PC-9 (cell line): ENCODE measurements at regions of chr11 and their contacts with region 1.

Region 1: DNA sequence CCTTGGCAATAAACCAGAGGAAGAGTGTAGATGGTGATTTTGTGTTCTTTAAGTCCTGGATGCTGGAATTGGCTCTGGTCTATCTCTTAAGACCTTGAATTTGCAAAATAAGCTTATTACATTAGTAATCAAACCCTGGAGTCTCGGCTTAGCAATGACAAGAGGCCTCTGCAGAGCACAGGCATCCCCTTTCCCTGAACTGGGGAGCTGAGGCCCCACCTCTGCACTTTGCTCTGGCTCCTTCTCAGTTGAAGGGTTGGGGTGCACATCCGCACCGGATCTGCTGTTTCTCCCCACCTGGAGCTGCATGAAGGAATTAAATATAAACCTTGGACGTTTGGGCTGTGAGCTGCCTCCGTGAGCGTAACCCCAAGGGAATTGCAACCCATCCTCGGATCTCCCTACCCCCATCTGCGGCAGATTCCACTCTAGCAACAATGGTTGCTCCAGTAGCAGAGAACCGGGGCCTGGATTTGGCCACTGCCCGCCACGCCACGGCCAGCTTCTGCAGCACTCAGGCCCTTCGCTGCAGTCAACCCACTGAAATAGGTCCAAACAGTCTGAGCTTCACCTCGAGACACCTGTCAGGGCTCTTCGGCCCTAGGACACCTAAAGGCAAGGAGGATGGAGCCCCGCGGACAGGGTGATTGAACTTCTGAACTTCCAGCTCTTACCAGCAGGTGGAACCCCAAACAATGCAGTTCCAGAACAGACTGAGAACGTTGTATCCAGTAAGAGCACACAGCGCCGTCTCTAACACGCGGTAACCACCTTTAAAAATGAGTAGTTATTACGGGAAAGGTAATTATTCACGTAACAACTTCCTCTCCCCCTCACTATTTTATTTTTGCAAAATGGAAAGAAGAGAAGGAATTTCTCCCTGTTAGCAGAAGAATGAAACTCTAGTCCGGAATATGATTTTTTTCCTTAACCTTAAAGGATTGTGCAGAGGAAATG is 54.8 kb upstream of the CAPRIN1 start:
- DNase-seq: peak; percentile 73 to 81
- H3K4me3 ChIP-seq: peak overlapping the region; percentile 17
- H3K27ac ChIP-seq: no peak overlapping the region
- H3K4me1 ChIP-seq: peaks cover 11% of the 10 kb centered on the region
- H3K27me3 ChIP-seq: no peaks in the 10 kb centered on the region
- CTCF ChIP-seq: peak; percentile 93

Region 2: DNA sequence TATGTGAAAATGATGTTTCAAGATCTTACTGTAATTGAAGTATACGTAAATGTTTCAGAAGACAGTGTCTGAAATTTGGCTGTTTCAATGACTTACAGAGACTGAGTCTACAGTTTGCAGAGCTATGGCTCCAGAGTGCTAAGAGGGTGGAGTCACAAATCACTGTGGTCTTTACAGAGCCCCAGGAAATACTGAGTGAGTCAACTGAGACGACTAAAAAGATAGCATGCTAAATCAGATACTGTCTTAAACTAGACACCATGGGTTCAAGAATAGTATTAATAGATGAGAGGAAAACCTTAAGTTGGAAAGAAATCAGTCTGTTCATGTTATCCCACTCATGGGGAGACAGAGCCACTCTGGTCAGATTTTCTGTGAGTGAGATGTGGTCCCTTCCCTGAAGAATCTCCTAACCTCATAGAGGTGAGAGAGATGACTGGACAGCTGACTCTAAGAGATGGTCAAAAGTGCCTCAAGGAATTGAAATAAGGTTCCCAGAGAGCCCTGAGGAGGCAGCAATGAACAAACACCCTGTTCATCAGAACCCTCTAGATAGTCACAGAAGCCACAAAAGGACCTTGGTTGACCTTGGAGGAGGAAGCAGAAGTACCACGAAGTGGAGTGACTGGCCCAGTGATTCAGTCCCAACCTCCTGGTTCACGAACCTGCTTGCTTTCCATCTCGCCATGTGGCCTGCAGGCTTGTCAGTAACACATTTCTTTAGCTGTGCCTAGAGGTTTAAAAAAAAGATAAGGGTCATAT is 326.3 kb before region 1 on chr11:
- CTCF ChIA-PET with region 1: interaction called, 11 read pairs
- POLR2A ChIA-PET with region 1: no interaction called
- intact Hi-C with region 1: no loop called
- DNase-seq: no peak
- H3K4me3 ChIP-seq: no peak overlapping the region
- H3K27ac ChIP-seq: no peak overlapping the region
- H3K4me1 ChIP-seq: peaks cover 11% of the 10 kb centered on the region; the same call in 1 of the 2 replicates
- H3K27me3 ChIP-seq: no peaks in the 10 kb centered on the region
- CTCF ChIP-seq: no peak

Region 3: DNA sequence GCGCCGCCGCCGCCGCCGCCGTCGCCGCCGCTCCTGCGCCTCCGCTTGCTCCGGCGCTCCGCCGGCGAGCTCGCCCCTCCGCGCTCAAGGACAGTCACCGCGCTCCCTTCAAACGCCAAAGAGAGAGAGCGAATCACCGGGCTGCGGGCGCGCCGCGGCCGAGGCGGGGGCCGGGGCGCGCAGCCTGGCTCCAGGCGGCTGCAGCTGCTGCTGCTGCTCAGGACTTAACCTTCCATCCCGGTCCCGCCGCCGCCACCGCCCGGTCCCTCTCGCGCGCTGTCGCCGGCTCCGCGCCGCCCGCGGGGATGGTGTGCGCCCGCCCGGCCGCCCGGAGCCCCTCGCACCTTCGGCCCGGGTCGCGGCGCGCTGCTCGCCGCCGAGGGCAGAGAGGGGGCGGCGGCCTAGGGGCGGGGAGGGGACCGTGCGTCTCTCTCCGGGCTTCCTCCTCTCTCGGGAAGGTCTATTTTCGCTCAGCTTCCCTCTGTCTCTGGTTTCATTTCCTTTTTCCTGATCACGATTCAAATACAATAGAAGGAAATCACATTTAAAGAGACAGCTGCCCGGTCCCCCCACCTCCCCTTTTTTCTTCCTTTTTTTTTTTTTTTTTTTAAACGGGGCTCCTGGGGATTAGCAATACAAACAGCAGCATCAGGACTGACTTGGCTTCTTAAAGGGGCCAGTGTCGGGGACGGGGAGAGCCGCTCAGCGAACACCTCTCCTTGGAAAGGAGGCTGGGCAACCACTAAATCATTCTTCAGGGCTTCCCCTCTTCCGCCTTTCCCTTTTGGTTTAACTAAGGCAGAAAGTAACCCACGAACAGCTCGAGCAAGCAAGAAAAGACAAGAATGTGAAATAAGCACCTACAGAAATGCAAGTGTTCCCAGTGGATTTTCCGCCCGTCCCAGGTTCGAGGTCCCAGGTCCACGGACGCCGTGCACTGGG is 127.0 kb before region 1 on chr11:
- CTCF ChIA-PET with region 1: no interaction called
- POLR2A ChIA-PET with region 1: no interaction called
- intact Hi-C with region 1: no loop called
- DNase-seq: peak in 1 of 2 experiments; percentile 29
- H3K4me3 ChIP-seq: peak overlapping the region; percentile 71
- H3K27ac ChIP-seq: no peak overlapping the region
- H3K4me1 ChIP-seq: no peaks in the 10 kb centered on the region
- H3K27me3 ChIP-seq: peaks cover 55% of the 10 kb centered on the region
- CTCF ChIP-seq: no peak

Region 4: GRCh38 chr11:34051349-34052035 is 54.7 kb after region 1 on chr11 and contains the start of gene CAPRIN1:
- CTCF ChIA-PET with region 1: no interaction called
- POLR2A ChIA-PET with region 1: interaction called, 4 read pairs
- intact Hi-C with region 1: loop called (anchors 1 kb)
- DNase-seq: peak; percentile 84 to 93
- H3K4me3 ChIP-seq: peak within 1 kb of the TSS; percentile 72
- H3K27ac ChIP-seq: peak within 1 kb of the TSS; percentile 94
- H3K4me1 ChIP-seq: peaks cover 39% of the 10 kb centered on the region
- H3K27me3 ChIP-seq: no peaks in the 10 kb centered on the region
- CTCF ChIP-seq: no peak
- total RNA-seq, gene CAPRIN1: 258 and 289 TPM in 2 replicates

Region 5: DNA sequence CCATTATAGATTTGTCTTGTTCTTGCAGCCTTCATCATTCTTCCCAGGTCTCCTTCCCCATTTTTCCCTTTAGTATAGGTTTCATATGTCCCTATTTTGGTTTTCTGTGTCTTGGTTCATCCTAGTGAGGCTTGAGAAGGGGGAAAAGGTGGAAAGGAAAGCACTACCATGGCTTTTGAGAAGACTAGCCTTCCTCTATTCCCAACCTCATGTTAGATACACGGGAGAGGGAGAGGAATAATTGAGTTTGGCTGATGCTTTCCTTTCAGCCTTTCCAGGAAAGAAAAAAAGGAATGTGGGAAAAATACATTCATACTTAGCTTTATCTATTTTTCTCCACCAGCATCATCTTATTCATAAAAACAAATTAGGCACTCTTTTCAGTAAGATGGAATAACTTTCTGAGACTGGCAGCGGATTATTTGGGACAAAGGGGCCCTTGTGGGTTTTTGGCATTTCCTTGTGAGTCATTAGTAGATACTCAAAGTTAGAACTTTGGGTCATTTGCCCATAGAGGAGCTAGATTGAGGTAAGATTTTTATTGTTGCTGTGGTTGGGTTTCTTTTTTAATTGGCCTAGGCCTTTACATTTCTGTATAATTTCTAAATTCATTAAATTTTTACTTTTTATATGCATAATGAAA is 78.5 kb after region 1 on chr11:
- CTCF ChIA-PET with region 1: interaction called, 6 read pairs
- POLR2A ChIA-PET with region 1: no interaction called
- intact Hi-C with region 1: loop called (anchors 1 kb)
- DNase-seq: peak; percentile 21 to 87
- H3K4me3 ChIP-seq: no peak overlapping the region
- H3K27ac ChIP-seq: peak overlapping the region; percentile 92
- H3K4me1 ChIP-seq: peaks cover 43% of the 10 kb centered on the region
- H3K27me3 ChIP-seq: no peaks in the 10 kb centered on the region
- CTCF ChIP-seq: no peak

Region 6: GRCh38 chr11:34105079-34105956 is 108.5 kb after region 1 on chr11 and contains the start of gene NAT10:
- CTCF ChIA-PET with region 1: no interaction called
- POLR2A ChIA-PET with region 1: no interaction called
- intact Hi-C with region 1: loop called (anchors 1 kb)
- DNase-seq: peak; percentile 97
- H3K4me3 ChIP-seq: peak within 1 kb of the TSS; percentile 88
- H3K27ac ChIP-seq: peak within 1 kb of the TSS; percentile 90
- H3K4me1 ChIP-seq: peaks cover 20% of the 10 kb centered on the region
- H3K27me3 ChIP-seq: no peaks in the 10 kb centered on the region
- CTCF ChIP-seq: no peak
- total RNA-seq, gene NAT10: 53.2 and 62.3 TPM in 2 replicates

Region 7: DNA sequence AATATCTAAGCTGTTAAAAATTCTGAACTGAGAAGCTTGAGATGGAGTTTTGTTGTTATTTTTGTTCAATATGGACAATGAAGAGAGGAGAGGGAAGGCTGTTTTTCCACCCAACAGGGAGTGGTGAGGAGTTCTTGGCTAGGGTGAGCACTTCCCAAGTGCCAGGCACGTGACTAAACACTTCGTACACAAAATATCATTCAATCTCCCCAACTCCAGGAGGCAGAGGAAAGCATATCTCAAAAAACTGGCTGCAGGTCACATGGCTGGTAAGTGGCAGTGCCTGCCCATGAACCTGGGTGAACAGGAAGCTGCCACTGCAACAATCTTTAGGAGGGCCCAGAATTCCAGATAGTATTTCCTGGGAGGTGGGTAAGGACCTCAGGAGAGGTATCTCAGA is 505.2 kb after region 1 on chr11:
- CTCF ChIA-PET with region 1: no interaction called
- POLR2A ChIA-PET with region 1: no interaction called
- intact Hi-C with region 1: no loop called
- DNase-seq: peak; percentile 38 to 63
- H3K4me3 ChIP-seq: peak overlapping the region; percentile 19; the same call in 1 of the 2 replicates
- H3K27ac ChIP-seq: peak overlapping the region; percentile 93
- H3K4me1 ChIP-seq: peaks cover 49% of the 10 kb centered on the region
- H3K27me3 ChIP-seq: no peaks in the 10 kb centered on the region
- CTCF ChIP-seq: no peak

Region 8: GRCh38 chr11:34899633-34900016 is 902.8 kb after region 1 on chr11:
- CTCF ChIA-PET with region 1: no interaction called
- POLR2A ChIA-PET with region 1: no interaction called
- intact Hi-C with region 1: loop called (anchors 5 kb)
- DNase-seq: no peak
- H3K4me3 ChIP-seq: no peak overlapping the region
- H3K27ac ChIP-seq: no peak overlapping the region
- H3K4me1 ChIP-seq: no peaks in the 10 kb centered on the region
- H3K27me3 ChIP-seq: no peaks in the 10 kb centered on the region
- CTCF ChIP-seq: no peak